Activated CD4-positive, alpha-beta T cell treated with anti-CD3 and anti-CD28 coated beads, Interleukin-2, amount 10 ng/mL, durations not matched to agents 24 days and 14 days (primary cell): ENCODE measurements at regions of chr10 and their contacts with region 1.

Region 1: DNA sequence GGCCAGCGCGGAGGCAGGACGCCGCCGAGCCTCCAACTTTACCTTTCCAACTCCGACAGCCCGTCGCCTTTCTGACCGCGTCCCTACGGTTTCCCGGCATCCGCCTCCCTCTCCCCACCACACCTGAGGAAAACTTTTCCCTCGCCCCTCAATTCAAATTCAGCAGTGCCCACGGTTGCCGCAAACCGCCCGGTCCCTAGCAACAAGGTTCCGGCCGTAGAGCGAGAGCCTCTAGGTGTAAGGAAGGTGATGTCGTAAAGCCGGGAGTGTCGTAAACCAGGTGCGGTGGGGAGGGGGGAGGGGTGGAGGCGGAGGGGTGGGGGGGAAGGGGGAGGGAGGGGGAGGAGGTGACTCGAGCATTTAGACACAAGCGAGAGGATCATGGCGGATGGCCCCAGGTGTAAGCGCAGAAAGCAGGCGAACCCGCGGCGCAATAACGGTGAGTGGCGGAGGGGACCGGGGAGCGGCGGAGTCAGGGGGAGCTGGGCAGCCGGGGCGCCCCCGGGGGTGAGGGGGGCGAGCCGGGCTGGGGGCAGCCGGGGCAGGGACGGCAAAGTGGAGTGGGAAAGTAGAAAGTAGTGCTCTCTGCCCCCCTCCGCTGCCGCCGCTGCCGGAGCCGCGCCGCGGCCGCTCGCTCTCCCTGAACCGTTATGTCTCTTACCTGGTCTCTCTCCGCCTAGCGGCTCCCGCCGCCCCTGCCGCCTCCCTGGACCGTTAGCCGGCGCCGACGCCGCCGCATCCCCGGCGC is at the start of gene ZEB1:
- DNase-seq: peak; percentile 96
- H3K4me3 Mint-ChIP-seq: peak within 1 kb of the TSS; percentile 99
- H3K27ac Mint-ChIP-seq: peak within 1 kb of the TSS; percentile 100
- H3K4me1 Mint-ChIP-seq: peaks cover 42% of the 10 kb centered on the region
- H3K27me3 Mint-ChIP-seq: no peaks in the 10 kb centered on the region
- total RNA-seq, gene ZEB1: 71.9 and 79.0 TPM in 2 replicates

Region 2: DNA sequence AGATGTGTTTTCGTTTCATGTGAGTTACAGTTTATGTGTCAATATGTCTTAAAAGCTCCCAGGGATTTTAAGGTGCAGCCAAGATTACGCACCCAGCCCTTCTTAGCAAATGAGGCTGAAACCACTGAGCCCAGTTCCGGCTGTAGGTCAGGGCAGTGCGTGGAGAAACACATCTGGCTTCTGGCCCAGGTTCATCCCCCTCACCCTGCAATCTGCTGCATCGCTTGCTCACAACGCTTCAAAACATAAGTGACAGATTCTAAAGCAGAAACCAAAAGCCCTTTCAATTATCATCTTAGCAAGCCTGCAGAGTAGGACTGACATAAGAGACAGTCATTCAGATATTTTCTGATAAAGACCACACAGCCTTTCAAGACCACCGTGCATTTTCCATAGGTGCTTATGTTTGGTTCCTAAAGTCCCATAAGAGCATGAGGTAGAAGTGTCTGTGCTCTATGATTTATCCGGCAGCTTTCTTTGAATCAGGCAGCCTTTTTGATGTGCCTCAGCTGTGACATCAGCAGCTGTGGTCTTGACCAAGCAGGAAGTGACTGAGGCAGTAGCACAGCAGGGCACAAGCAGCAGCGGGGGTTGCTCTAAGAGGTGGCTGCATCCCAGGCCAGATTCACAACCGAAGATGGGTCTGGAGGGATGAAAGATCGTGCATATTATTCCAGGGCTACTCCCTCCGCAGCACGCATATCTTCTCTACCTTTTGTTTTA is 617.4 kb before region 1 on chr10:
- intact Hi-C with region 1: loop called (anchors 10 kb)
- DNase-seq: peak; percentile 92
- H3K4me3 Mint-ChIP-seq: peak overlapping the region; percentile 76
- H3K27ac Mint-ChIP-seq: peak overlapping the region; percentile 95
- H3K4me1 Mint-ChIP-seq: peaks cover 78% of the 10 kb centered on the region
- H3K27me3 Mint-ChIP-seq: no peaks in the 10 kb centered on the region

Region 3: DNA sequence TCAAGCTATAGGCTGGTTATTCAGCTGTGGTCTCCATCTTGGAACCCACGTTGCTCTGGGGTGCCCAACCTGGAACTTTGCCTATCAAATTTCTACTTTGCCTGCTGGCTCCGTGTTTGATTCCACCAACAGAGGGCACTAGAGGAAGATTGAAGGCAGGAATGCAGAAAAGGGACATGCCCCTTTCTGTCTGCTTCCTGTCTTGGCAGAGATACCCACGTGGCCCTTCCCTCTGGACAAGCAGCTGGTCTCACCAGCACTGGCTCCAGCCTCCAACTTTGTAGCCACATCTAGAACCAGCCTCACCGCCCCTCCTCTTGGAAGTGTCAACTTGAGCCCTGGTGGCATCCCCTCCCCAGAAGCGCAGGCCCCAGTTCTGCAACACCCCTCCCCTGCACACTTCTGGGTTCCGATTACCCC is 235.3 kb before region 1 on chr10:
- intact Hi-C with region 1: loop called (anchors 1 kb)
- DNase-seq: peak; percentile 91
- H3K4me3 Mint-ChIP-seq: no peak overlapping the region
- H3K27ac Mint-ChIP-seq: peak overlapping the region; percentile 66
- H3K4me1 Mint-ChIP-seq: peaks cover 11% of the 10 kb centered on the region
- H3K27me3 Mint-ChIP-seq: no peaks in the 10 kb centered on the region

Region 4: GRCh38 chr10:31340343-31340742 is 21.3 kb after region 1 on chr10:
- intact Hi-C with region 1: loop called (anchors 1 kb)
- DNase-seq: no peak
- H3K4me3 Mint-ChIP-seq: no peak overlapping the region
- H3K27ac Mint-ChIP-seq: no peak overlapping the region
- H3K4me1 Mint-ChIP-seq: peaks cover 12% of the 10 kb centered on the region
- H3K27me3 Mint-ChIP-seq: no peaks in the 10 kb centered on the region

Region 5: DNA sequence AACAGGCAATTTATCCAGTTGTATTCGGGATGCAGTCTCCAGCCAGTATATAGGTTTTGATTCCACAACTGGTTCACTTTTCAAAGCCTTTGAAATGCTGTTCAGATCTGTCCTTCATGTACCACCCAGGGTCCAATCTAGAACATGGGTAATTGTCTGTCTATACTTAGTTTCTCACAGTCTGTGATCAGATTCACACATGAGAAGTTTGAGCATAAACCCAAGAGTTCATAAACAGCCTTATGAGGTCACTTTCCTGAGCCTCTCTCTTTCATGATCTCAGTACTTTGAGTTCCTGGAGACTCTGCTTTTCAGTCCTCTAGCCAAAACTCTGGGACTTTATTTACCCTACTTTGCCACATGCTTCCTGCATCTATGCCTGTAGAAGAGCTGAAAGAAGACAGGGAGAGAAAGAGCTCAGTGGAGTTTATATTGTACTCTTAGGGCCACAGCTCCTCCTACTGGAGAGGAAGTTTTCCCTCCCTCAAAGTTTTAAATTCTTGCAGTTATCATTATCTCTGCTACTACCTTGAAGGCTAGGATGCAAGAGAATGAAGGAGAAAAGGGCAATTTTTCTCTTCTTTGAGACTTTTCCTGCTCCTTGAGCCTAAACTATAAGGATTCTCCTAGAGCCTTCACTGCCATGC is 172.0 kb after region 1 on chr10:
- intact Hi-C with region 1: loop called (anchors 2 kb)
- DNase-seq: peak; percentile 78
- H3K4me3 Mint-ChIP-seq: no peak overlapping the region
- H3K27ac Mint-ChIP-seq: peak overlapping the region; percentile 65
- H3K4me1 Mint-ChIP-seq: peaks cover 5% of the 10 kb centered on the region
- H3K27me3 Mint-ChIP-seq: no peaks in the 10 kb centered on the region

Region 6: DNA sequence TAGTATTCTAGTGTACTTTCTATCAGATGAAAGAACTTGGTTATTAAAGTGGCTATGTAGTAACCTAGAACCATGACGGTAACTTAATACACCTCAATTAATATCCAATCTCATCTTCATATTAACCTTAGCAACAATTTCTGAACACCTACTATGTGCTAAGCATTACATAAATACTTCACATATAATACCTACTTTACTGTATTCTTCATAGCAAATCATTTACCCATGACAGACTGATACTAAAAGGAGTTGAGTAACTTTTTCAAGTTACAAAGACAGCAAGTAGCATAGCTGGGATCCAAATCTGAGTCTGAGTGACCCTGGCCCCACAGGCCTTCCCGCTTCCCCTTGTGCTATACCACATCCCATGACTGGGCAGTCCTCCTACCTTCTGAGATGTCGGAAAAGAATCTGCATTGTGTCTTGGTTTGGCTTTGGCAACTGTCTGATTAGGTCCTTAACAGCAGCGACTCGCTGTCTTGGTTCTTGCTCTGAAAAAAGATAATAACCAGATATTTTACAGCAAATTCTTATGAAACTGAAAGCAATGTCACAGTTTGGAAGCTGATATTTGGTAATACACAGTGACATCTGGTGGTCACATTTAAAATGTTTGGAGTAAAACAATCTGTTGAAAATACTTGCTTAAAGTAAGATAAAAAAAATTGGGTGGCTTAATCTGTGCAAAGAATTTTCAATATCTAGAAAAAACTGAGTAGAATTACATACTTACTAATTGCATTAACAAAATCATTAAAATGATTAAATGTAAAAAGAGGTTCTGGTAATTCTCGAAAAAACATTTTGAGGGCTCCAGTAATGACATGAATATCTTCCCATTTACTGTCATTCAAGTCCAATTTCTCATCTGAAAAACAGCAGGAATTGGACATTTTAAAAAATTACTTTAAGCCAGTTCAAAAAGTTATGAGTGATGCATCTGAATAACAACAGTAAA is 489.5 kb after region 1 on chr10:
- intact Hi-C with region 1: loop called (anchors 5 kb)
- DNase-seq: peak; percentile 71
- H3K4me3 Mint-ChIP-seq: peak overlapping the region; percentile 72
- H3K27ac Mint-ChIP-seq: peak overlapping the region; percentile 81
- H3K4me1 Mint-ChIP-seq: peaks cover 6% of the 10 kb centered on the region
- H3K27me3 Mint-ChIP-seq: no peaks in the 10 kb centered on the region